ENCODE measurements at regions of chr5 and their contacts with region 1.

Region 1: GRCh38 chr5:157820593-157821252 is 38.2 kb downstream of the CLINT1 start:
- DNase-seq: no peak
- H3K4me3 ChIP-seq: no peak overlapping the region
- H3K27ac ChIP-seq: peak overlapping the region; percentile 61
- H3K4me1 ChIP-seq: peaks cover 64% of the 10 kb centered on the region
- H3K27me3 ChIP-seq: no peaks in the 10 kb centered on the region
- CTCF ChIP-seq: peak; percentile 66

Region 2: DNA sequence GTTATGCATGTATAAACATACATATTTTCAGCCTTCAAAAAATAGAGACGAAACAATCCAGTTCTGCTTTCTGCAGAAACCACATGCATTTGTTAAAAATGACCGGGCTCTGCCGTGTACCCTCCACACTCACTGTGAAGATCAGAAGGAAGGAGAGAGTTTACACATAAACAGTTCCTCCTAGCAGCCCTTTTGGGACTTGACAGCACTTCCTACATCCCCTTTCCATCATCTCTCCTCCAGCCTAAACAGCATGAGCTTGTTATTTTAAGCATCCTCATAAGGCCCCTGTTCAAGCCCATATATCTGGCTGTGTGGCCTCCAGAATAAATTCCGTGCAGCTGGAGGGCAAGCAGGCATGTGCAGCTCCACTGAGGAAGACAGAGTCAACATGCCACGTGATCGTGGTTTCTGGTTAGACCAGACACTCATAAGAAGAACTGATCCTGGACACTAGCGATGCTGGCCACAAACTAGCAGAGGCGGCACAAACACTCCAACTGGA is 318.5 kb before region 1 on chr5:
- intact Hi-C with region 1: no loop called
- DNase-seq: no peak
- H3K4me3 ChIP-seq: no peak overlapping the region
- H3K27ac ChIP-seq: no peak overlapping the region
- H3K4me1 ChIP-seq: peaks cover 28% of the 10 kb centered on the region
- H3K27me3 ChIP-seq: no peaks in the 10 kb centered on the region
- CTCF ChIP-seq: no peak

Region 3: GRCh38 chr5:157858527-157859226 is 38.0 kb after region 1 on chr5 and contains the start of gene CLINT1:
- intact Hi-C with region 1: loop called (anchors 5 kb)
- DNase-seq: peak; percentile 94
- H3K4me3 ChIP-seq: peak within 1 kb of the TSS; percentile 92
- H3K27ac ChIP-seq: peak within 1 kb of the TSS; percentile 90
- H3K4me1 ChIP-seq: peaks cover 55% of the 10 kb centered on the region
- H3K27me3 ChIP-seq: no peaks in the 10 kb centered on the region
- CTCF ChIP-seq: no peak
- total RNA-seq, gene CLINT1: 48.6 TPM

Region 4: GRCh38 chr5:157903117-157903450 is 82.4 kb after region 1 on chr5:
- intact Hi-C with region 1: no loop called
- DNase-seq: no peak
- H3K4me3 ChIP-seq: no peak overlapping the region
- H3K27ac ChIP-seq: no peak overlapping the region
- H3K4me1 ChIP-seq: no peaks in the 10 kb centered on the region
- H3K27me3 ChIP-seq: no peaks in the 10 kb centered on the region
- CTCF ChIP-seq: no peak

Region 5: GRCh38 chr5:157948738-157949410 is 128.2 kb after region 1 on chr5:
- intact Hi-C with region 1: loop called (anchors 10 kb)
- DNase-seq: peak; percentile 84
- H3K4me3 ChIP-seq: peak overlapping the region; percentile 30
- H3K27ac ChIP-seq: peak overlapping the region; percentile 21
- H3K4me1 ChIP-seq: peaks cover 9% of the 10 kb centered on the region
- H3K27me3 ChIP-seq: no peaks in the 10 kb centered on the region
- CTCF ChIP-seq: peak; percentile 96

Region 6: DNA sequence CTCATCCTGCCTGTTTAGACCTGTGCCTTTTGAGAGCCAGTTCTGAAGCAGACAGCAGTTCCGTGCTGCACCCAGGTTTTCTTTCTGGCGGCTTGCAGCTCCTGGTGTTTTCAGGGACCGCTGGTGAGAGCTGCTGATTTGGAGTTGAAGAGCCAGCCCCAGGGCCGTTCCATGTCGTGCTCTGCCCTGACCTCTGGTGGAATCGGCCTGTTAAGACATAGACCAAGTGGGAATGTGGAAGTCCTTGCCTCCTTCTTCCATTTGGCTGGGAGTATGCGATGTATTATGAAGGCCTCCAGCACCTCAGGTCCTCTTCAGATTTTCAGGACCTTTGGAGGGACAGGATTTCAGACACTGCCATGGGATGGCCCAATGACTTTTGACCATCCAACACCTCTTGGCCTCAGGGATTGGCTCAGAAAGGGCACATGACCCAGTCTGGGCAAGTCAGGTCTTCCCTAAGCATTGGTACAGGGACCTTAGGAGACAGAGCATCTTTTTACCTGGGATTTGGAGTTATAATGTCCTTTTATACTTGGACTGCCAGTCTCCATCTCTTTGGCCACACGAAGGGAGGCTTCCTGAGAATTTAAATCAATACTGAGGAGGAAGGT is 174.3 kb after region 1 on chr5:
- intact Hi-C with region 1: loop called (anchors 5 kb)
- DNase-seq: peak; percentile 55
- H3K4me3 ChIP-seq: no peak overlapping the region
- H3K27ac ChIP-seq: no peak overlapping the region
- H3K4me1 ChIP-seq: no peaks in the 10 kb centered on the region
- H3K27me3 ChIP-seq: no peaks in the 10 kb centered on the region
- CTCF ChIP-seq: peak; percentile 82